Ascending aorta (tissue), 2 donors: ENCODE measurements at regions of chr13 and their contacts with region 1.

Region 1: GRCh38 chr13:47774671-47774994 is 226.4 kb downstream of the SUCLA2 start:
- DNase-seq: no peak
- H3K4me3 ChIP-seq: no peak overlapping the region
- H3K27ac ChIP-seq: no peak overlapping the region
- H3K4me1 ChIP-seq: no peaks in the 10 kb centered on the region
- H3K27me3 ChIP-seq: no peaks in the 10 kb centered on the region
- CTCF ChIP-seq: no peak

Region 2: DNA sequence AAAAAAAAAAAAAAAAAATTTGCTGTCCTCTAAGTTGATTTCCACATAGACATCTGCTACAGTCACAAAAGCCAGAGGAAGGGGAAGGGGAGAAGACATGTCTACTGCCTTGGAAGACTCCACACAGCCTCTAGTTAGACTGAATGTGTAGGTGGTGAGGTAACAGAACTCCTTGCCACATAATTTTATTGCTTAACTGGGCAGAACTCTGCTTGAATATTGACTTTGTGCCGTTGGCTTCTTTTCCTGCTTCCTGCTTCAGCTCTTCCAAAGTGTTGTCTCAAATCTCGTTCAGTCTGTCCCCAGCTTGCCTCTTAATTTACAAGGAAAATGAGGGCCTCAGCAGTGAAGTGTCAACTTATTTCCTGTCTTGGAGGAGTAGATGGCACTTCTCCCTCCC is 1014.8 kb before region 1 on chr13:
- intact Hi-C with region 1: loop called (anchors 5 kb)
- DNase-seq: no peak
- H3K4me3 ChIP-seq: no peak overlapping the region
- H3K27ac ChIP-seq: peak overlapping the region; percentile 62 to 83
- H3K4me1 ChIP-seq: peaks cover 7 to 19% of the 10 kb centered on the region in 2 donors
- H3K27me3 ChIP-seq: no peaks in the 10 kb centered on the region
- CTCF ChIP-seq: no peak

Region 3: GRCh38 chr13:46831588-46832194 is 942.9 kb before region 1 on chr13:
- intact Hi-C with region 1: loop called (anchors 1 kb)
- DNase-seq: peak in 1 of 2 donors; percentile 64
- H3K4me3 ChIP-seq: no peak overlapping the region
- H3K27ac ChIP-seq: no peak overlapping the region
- H3K4me1 ChIP-seq: no peaks in the 10 kb centered on the region
- H3K27me3 ChIP-seq: no peaks in the 10 kb centered on the region
- CTCF ChIP-seq: peak; percentile 56 to 84 (median 72)

Region 4: DNA sequence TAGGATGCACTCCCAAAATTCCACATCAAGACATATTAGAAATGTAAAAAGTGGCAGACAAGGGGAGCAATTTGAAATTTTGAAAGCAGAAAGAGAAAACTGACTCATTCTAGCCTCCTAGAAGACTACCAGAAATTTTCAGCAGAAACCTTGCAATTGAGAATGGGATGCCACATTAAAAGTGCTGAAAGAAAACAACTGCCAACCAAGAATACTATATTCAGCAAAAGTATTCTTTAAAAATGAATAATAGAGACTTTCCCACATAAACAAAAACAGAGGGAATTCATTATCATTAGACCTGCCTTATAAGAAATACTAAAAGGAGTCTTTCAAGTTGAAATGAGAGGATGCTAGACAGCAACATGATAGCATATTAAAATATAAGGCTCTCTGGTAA is 799.5 kb before region 1 on chr13:
- intact Hi-C with region 1: loop called (anchors 10 kb)
- DNase-seq: no peak
- H3K4me3 ChIP-seq: no peak overlapping the region
- H3K27ac ChIP-seq: no peak overlapping the region
- H3K4me1 ChIP-seq: no peaks in the 10 kb centered on the region
- H3K27me3 ChIP-seq: no peaks in the 10 kb centered on the region
- CTCF ChIP-seq: no peak

Region 5: DNA sequence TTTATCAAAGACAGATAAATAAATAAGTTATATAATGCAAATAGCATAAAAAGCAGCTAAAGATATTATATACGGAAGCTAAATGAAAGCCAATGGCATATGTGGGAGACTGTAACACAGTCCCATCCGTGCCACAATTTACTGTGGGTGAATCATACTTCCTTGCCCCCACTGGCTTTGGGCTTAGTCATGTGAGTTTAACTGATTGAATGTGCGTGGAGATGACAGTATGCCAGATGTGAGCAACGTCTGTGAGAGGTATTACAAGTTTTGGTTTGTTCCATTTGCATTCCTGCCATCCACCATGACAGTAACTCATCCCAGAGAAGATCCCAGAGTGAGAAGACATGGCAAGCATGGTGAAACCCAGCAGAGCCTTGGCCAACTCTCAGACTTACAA is 113.6 kb before region 1 on chr13:
- intact Hi-C with region 1: no loop called
- DNase-seq: no peak
- H3K4me3 ChIP-seq: no peak overlapping the region
- H3K27ac ChIP-seq: no peak overlapping the region
- H3K4me1 ChIP-seq: no peaks in the 10 kb centered on the region
- H3K27me3 ChIP-seq: no peaks in the 10 kb centered on the region
- CTCF ChIP-seq: no peak

Region 6: DNA sequence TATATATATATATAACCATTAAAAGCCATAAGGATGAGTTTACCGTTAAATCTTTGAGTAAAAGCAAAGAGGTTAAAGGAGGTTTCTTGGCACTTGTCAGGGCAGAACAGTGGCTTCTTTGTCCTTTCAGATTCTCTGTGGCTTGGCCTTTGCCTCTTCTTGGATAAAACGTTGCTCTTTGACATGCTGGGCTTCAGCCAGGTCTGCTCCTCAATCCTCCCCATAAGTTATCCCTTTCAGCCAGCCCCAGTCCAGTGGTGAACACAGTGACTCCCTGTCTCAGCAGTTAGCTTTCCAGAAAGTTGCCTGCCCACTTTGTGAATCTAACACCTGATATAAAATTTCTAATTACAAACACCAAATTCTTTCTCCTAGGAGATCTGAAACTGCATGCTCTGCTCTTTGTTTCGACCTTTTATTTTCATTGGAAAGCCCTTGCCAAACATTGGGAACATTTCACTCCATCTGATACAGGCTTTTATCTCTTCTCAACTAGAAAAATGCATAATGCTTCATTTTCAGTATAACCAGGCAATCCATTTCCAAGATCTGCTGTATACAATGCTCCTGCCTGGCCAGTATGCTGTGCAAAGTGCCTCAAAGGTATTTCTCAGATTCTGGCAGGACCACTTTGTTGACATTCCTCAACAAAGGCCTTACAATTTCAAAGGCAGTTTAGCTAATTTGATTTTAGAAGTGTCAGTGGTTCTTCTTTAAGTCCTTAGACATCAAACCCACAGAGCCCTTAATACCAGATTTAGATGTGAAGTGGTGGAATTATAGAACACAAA is 336.5 kb after region 1 on chr13:
- intact Hi-C with region 1: no loop called
- DNase-seq: no peak
- H3K4me3 ChIP-seq: no peak overlapping the region
- H3K27ac ChIP-seq: peak overlapping the region; percentile 51 to 52
- H3K4me1 ChIP-seq: peaks cover 0 to 7% of the 10 kb centered on the region in 2 donors
- H3K27me3 ChIP-seq: no peaks in the 10 kb centered on the region
- CTCF ChIP-seq: no peak